ENCODE measurements at regions of chr9 and their contacts with region 1.

Region 1: DNA sequence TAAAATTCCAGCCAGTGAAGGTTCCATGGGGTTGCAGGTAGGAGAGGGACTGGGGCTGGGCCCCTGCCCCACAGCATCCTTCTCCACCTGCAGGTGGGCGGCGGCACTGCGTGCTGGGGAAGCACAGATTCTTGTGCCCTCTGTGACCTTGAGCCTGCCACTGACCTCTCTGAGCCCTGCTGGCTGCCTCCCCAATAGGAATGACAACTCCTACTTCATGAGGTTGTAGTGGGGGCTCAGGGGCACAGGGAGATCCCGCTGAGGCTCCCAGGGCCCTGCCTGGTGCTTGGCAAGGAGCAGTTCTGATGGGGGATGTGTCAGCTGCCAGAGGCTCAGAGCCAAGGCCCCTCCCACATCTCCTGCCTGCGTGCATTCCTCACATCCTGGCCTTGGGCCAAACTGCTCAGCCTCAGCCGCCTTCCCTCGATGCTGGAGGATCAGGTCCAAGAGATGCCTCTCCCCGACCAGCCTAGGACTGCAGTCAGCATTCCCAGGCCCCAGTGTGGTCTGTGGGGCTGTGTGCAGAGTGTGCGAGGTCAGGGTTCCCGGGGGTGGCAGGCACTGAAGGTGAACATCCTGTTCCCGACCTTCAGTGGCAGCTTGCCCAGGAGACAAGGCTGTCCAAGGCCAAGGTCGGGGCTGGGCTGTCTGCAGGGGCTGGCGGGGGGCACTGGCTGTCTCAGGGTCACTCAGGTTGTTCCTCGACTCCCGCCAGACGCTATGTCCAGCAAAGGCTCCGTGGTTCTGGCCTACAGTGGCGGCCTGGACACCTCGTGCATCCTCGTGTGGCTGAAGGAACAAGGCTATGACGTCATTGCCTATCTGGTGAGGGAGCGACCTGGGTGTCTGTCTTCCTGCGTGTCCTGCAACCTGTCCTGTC is 7.0 kb downstream of the ASS1 start:
- ATAC-seq: peak; percentile 58 to 84 (median 81)
- H3K4me3 ChIP-seq: no peak overlapping the region
- H3K27ac ChIP-seq: peak overlapping the region; percentile 16 to 81
- H3K4me1 ChIP-seq: peaks cover 53 to 57% of the 10 kb centered on the region in 2 donors

Region 2: GRCh38 chr9:130682490-130683121 is 230.9 kb after region 1 on chr9:
- in situ Hi-C with region 1: loop called in 5 of 9 experiments (anchors 10 to 25 kb)
- ATAC-seq: peak; percentile 18 to 54 (median 34)
- H3K4me3 ChIP-seq: peak overlapping the region in 3 of 5 donors; percentile 47 to 57 (median 52)
- H3K27ac ChIP-seq: no peak overlapping the region
- H3K4me1 ChIP-seq: peaks cover 0 to 4% of the 10 kb centered on the region in 2 donors